ENCODE measurements at regions of chr1 and their contacts with region 1.

Region 1: GRCh38 chr1:223068900-223069665 is 74.0 kb downstream of the TLR5 start:
- DNase-seq: no peak
- H3K4me3 ChIP-seq: no peak overlapping the region
- H3K27ac ChIP-seq: no peak overlapping the region
- H3K4me1 ChIP-seq: no peaks in the 10 kb centered on the region
- H3K27me3 ChIP-seq: peaks cover 9% of the 10 kb centered on the region
- CTCF ChIP-seq: no peak

Region 2: GRCh38 chr1:222970040-222970439 is 99.0 kb before region 1 on chr1:
- CTCF ChIA-PET with region 1: no interaction called
- dilution Hi-C with region 1: no loop called
- in situ Hi-C with region 1: no loop called
- intact Hi-C with region 1: no loop called
- DNase-seq: no peak
- H3K4me3 ChIP-seq: no peak overlapping the region
- H3K27ac ChIP-seq: no peak overlapping the region
- H3K4me1 ChIP-seq: no peaks in the 10 kb centered on the region
- H3K27me3 ChIP-seq: peaks cover 4% of the 10 kb centered on the region
- CTCF ChIP-seq: no peak

Region 3: GRCh38 chr1:223031733-223032601 is 37.1 kb before region 1 on chr1:
- CTCF ChIA-PET with region 1: interaction called, 26 read pairs
- dilution Hi-C with region 1: no loop called
- in situ Hi-C with region 1: no loop called
- intact Hi-C with region 1: no loop called
- DNase-seq: no peak
- H3K4me3 ChIP-seq: no peak overlapping the region
- H3K27ac ChIP-seq: no peak overlapping the region
- H3K4me1 ChIP-seq: no peaks in the 10 kb centered on the region
- H3K27me3 ChIP-seq: no peaks in the 10 kb centered on the region
- CTCF ChIP-seq: no peak